Activated naive CD4-positive, alpha-beta T cell treated with anti-CD3 and anti-CD28 coated beads, Interleukin-2, amount 10 ng/mL, durations not matched to agents 7 days and 5 days (primary cell): ENCODE measurements at regions of chr6 and their contacts with region 1.

Region 1: GRCh38 chr6:24766680-24767462 is 7.9 kb upstream of the GMNN start:
- DNase-seq: no peak
- H3K4me3 Mint-ChIP-seq: no peak overlapping the region
- H3K27ac Mint-ChIP-seq: no peak overlapping the region
- H3K4me1 Mint-ChIP-seq: peaks cover 5% of the 10 kb centered on the region
- H3K27me3 Mint-ChIP-seq: no peaks in the 10 kb centered on the region

Region 2: DNA sequence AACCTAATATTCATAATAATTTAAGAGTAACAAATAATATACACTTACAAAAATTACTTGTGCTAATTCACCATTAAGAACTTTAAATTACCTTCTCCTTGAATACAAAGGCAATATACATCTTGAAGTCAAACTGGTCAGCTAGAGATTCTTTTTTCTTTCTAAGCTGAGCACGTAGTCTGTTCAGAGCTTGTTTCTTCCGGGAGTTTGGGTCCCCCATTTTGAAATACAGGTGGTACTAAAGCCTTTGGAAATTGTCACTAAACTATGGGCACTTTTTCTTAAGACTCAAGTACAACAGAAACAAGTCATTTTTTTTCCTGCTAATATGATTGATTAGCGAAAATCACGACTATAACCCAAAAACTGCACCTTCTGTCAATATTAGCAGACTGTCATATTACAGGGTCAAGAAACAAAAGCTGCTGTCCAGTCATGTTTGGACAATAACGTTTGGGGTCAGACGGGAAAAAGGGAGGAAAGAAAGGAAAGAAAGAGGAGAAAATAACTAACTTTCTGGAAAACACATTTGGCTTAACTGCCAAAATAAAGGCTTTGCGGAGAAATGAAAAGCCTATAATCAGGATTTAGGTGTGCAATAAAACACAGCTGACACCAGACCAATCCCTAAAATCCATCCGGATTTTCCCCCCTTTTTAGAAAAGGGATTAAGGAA is 48.3 kb before region 1 on chr6:
- CTCF ChIA-PET with region 1: interaction called, 10 read pairs
- DNase-seq: no peak
- H3K4me3 Mint-ChIP-seq: peak overlapping the region; percentile 84
- H3K27ac Mint-ChIP-seq: peak overlapping the region; percentile 100
- H3K4me1 Mint-ChIP-seq: peaks cover 64% of the 10 kb centered on the region
- H3K27me3 Mint-ChIP-seq: peaks cover 6% of the 10 kb centered on the region

Region 3: GRCh38 chr6:24847402-24847801 is 80.5 kb after region 1 on chr6:
- CTCF ChIA-PET with region 1: no interaction called
- DNase-seq: no peak
- H3K4me3 Mint-ChIP-seq: no peak overlapping the region
- H3K27ac Mint-ChIP-seq: peak overlapping the region; percentile 66
- H3K4me1 Mint-ChIP-seq: peaks cover 41% of the 10 kb centered on the region
- H3K27me3 Mint-ChIP-seq: no peaks in the 10 kb centered on the region